Head of caudate nucleus (tissue), 42 donors: ENCODE measurements at regions of chr10 and their contacts with region 1.

Region 1: DNA sequence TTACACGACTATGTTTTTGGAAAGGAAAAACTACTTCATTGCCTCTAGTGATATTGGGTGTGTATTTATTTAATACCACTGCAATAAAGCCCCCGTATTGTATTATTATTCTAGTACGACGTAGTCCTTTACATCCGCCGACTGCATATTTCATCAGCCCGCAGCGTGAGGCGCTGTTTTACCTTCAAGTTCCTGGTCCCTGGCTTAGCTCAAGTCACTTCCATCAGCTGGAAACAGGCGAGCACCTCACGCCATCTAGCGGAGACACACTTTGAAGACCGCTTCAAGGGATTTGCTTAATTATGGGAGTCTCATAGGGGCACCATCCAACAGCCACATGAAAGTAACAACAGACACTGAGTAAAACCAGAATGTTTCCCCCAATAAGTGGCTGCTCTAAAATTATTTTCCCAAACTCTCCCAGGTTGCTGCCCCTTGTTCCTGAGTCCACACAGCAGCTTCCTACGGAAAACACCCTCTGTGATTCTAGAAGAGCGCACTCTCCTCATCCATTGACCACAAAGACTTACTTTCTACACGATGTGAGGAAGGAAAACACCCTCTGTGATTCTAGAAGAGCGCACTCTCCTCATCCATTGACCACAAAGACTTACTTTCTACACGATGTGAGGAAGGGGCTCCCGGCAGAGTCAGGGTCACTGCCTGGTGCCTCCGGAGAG is 15.7 kb upstream of the ITIH2 start:
- DNase-seq: peak; percentile 70 to 93 (median 86)

Region 2: GRCh38 chr10:7525314-7526016 is 161.9 kb before region 1 on chr10:
- intact Hi-C with region 1: loop called (anchors 2 kb)
- DNase-seq: peak in 37 of 42 donors; percentile 24 to 91 (median 72)